Activated CD4-positive, alpha-beta T cell treated with anti-CD3 and anti-CD28 coated beads for 36 hours (primary cell): ENCODE measurements at regions of chr2 and their contacts with region 1.

Region 1: DNA sequence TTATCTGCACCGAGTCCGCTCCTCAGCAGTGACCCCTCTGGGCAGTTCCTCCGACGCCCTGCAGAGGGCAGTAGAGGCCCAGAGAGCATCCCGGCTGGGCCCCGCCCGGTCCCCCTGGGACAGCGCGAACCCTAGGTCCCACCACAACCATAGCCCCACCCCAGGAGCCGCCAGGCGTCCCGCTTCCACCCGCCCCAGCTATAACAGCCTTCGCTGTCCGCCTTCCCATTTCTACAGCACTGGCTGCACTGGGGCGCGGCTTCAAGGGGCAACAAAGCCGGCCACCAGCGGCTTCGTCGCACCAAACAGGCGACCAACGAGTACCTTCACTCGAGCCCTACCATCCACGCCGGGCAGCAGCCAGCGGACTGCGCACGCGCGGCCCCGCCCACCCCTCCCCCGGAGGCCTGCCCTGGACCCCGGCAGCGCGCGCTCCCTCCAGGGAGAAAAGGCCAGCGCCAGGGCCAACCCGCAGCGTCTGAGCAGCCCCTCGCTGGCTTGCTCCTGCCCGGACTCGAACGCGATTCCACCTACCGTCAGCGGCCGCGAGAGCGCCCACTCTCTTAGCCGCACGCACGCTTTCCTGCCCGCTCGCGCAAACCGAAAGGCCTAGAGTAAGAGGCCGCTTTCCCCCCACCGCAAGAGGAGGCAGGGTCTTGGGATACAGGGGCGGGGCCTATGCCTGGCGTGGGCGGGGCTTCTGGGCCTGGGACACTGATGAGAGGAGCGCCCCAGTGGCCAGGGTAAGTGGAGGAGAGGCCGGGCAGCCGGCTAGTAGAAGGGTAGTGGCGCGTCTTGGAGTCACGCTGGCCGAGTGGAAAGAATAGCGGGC is at the start of gene NHEJ1:
- DNase-seq: peak; percentile 97
- ATAC-seq: peak; percentile 89
- H3K4me3 Mint-ChIP-seq: peak within 1 kb of the TSS; percentile 81
- H3K27ac Mint-ChIP-seq: peak within 1 kb of the TSS; percentile 88
- H3K4me1 Mint-ChIP-seq: peaks cover 13% of the 10 kb centered on the region
- H3K27me3 Mint-ChIP-seq: no peaks in the 10 kb centered on the region
- total RNA-seq, gene NHEJ1: 20.7 to 23.8 TPM

Region 2: GRCh38 chr2:219029829-219030165 is 130.6 kb before region 1 on chr2:
- CTCF ChIA-PET with region 1: interaction called, 44 read pairs
- POLR2A ChIA-PET with region 1: no interaction called
- intact Hi-C with region 1: loop called in 1 of 2 experiments (anchors 1 kb)
- DNase-seq: peak; percentile 88
- ATAC-seq: peak; percentile 98
- H3K4me3 Mint-ChIP-seq: no peak overlapping the region
- H3K27ac Mint-ChIP-seq: no peak overlapping the region
- H3K4me1 Mint-ChIP-seq: no peaks in the 10 kb centered on the region
- H3K27me3 Mint-ChIP-seq: peaks cover 11% of the 10 kb centered on the region

Region 3: DNA sequence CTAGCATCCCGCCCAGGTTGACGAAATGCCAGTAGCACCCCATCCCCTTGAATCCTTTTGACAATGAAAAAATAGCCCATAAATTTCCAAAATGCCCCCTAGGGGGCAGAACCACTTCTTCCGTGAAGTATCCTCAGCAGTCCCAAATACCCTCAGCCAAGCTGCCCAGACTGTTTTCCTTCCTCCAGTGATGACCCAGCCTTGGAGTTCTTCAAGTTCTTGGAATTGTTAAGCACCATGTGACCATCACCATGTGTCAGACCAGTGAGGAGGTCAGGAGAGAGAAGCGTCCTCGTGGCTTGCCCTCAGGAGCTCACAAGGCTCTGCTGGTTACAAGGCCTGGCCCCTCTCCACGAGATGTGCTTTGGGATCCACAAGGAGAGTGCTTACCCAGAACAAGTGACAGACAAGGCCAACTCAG is 10.8 kb after region 1 on chr2:
- CTCF ChIA-PET with region 1: interaction called, 24 read pairs
- POLR2A ChIA-PET with region 1: interaction called, 11 read pairs
- intact Hi-C with region 1: loop called in 1 of 2 experiments (anchors 1 kb)
- DNase-seq: peak; percentile 39
- ATAC-seq: peak; percentile 64
- H3K4me3 Mint-ChIP-seq: no peak overlapping the region
- H3K27ac Mint-ChIP-seq: peak overlapping the region; percentile 2
- H3K4me1 Mint-ChIP-seq: peaks cover 31% of the 10 kb centered on the region
- H3K27me3 Mint-ChIP-seq: no peaks in the 10 kb centered on the region

Region 4: DNA sequence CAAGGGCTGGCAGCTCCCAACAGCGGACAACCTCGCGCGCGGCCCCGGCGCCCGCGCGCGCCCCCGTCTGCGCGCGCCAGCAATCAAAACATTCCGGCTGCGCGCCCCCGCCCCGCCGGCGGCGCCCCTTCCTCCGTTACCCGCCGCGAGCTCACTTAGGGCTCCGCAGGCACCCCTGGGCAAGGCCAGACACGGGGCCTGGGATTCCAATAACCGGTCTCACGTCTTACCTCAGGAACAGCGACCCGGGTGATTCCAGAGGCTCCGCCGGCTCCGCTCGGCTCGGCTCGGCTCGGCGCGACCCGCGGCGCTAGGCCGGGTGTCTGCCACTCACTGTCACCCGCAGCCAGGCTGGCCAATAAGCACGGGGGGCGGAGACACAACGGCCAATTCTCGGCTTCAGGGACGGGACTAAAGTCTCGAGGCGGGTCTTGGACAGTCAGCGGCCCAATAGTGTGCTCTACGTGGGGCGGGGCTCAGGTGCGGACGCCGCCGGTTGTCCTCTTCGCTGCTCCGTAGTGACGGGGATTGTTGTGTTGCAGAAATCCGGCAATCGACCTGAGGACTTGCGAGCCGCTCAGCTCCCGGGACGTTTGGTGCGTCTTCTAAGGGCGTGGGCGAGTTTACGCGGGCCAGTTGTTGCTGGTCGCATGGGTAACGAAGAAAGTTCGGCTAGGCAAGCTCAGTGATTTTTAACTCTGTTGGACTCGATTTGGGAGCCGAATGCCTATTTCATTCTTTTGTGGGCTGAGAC is 69.1 kb after region 1 on chr2 and contains the starts of genes ANKZF1 and ATG9A:
- CTCF ChIA-PET with region 1: interaction called, 4 read pairs
- POLR2A ChIA-PET with region 1: no interaction called
- intact Hi-C with region 1: loop called (anchors 1 kb)
- DNase-seq: peak; percentile 99
- ATAC-seq: peak; percentile 98
- H3K4me3 Mint-ChIP-seq: peak within 1 kb of the TSS; percentile 98
- H3K27ac Mint-ChIP-seq: peak within 1 kb of the TSS; percentile 98
- H3K4me1 Mint-ChIP-seq: peaks cover 34% of the 10 kb centered on the region
- H3K27me3 Mint-ChIP-seq: no peaks in the 10 kb centered on the region
- total RNA-seq, gene ANKZF1: 140 to 166 TPM
- total RNA-seq, gene ATG9A: 43.5 to 45.6 TPM

Region 5: DNA sequence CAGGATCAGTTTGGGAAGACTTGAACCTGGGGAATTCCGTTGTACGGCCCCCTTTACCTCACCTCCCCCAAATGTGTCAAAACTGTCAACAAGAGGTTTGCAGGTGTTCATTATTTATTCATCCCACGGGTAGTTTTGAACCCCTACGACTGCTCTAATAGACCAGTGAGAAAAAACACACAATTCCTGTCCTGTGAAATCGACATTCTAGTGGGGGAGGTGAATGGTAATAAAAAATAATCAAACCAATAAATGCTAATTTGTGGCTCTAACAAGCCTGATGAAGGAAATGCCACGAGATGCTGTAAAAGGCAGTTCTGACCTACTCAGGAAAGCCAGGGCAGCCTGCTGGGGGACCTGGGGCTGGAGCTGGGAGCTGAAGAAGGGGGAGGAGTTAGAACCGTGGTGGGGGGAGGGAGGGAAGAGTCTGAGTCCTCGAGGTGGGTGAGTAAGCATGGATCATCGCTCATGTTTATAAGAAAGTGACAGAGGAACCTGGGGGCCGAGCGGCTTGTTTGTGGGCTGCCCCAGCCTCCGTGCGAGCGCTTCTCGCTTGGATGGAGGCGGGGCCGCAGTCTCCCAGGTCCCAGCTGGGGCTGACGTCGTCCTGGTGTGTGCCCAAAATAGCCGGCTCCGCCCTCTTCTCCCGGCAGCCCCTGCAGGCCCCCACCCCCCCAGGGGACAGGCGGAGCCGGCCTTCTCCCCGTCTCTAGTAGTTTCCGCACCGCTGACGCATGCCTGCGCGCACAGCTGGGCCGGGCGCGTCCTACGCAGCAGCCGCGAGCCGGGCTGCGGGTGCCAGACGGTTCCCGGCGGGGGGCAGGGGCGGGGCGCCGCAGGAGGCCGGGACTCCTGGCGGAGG is 118.5 kb after region 1 on chr2 and contains the start of gene DNAJB2:
- CTCF ChIA-PET with region 1: interaction called, 5 read pairs
- POLR2A ChIA-PET with region 1: no interaction called
- intact Hi-C with region 1: loop called in 1 of 2 experiments (anchors 1 kb)
- DNase-seq: peak; percentile 100
- ATAC-seq: peak; percentile 86
- H3K4me3 Mint-ChIP-seq: peak within 1 kb of the TSS; percentile 96
- H3K27ac Mint-ChIP-seq: peak within 1 kb of the TSS; percentile 95
- H3K4me1 Mint-ChIP-seq: peaks cover 37% of the 10 kb centered on the region
- H3K27me3 Mint-ChIP-seq: no peaks in the 10 kb centered on the region
- total RNA-seq, gene DNAJB2: 51.8 to 62.8 TPM

Region 6: GRCh38 chr2:219543601-219544358 is 383.4 kb after region 1 on chr2 and contains the starts of genes CHPF and TMEM198:
- CTCF ChIA-PET with region 1: no interaction called
- POLR2A ChIA-PET with region 1: no interaction called
- intact Hi-C with region 1: loop called in 1 of 2 experiments (anchors 5 kb)
- DNase-seq: peak; percentile 98
- ATAC-seq: peak; percentile 85
- H3K4me3 Mint-ChIP-seq: peak within 1 kb of the TSS; percentile 87
- H3K27ac Mint-ChIP-seq: peak within 1 kb of the TSS; percentile 66
- H3K4me1 Mint-ChIP-seq: peaks cover 22% of the 10 kb centered on the region
- H3K27me3 Mint-ChIP-seq: no peaks in the 10 kb centered on the region
- total RNA-seq, gene CHPF: 14.1 to 17.1 TPM
- total RNA-seq, gene TMEM198: 2.4 to 2.7 TPM